ENCODE measurements at regions of chr12 and their contacts with region 1.

Region 1: DNA sequence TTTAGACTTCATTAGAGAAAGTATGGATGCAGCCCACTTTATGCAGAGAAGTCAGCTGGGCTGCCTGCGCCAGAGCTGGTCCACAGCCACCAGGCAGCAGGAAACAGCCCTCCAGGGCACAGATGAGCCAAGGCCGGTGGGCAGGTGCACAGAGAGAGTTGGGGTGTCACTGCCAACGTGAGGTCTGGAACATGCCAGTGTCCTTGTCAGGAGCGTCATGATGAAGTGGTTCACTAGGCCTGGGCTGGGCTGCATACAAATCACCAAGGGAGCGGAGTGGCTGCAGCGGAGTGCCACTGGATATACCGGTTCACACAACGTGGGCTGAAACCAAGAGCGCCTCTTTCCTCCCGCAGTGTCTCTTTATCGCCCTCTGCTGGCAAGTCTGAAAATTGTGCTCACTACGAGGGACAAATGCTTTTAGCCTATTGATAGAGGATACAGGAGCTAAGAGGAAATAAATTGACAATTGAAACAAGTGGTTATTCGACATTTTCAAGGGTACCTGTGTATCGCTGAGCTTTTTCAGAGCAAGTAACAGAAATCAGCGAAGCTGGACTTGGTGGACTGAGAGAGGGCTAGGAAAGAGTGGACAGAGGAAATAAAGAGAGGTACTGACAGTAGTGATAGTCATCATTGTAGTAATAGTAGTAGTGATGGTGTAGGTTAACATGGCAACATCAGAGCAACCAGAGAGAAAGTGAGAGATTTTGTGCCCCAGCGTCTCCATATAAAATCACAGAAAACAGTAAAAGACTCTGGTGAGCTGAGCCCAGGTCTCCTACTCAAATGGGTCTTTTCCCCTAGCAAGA is 52.0 kb upstream of the ITPR2 start:
- DNase-seq: peak; percentile 81 to 93 (median 86)
- ATAC-seq: peak; percentile 96 to 100 (median 98)
- H3K4me3 ChIP-seq: no peak overlapping the region
- H3K27ac ChIP-seq: no peak overlapping the region
- H3K4me1 ChIP-seq: no peaks in the 10 kb centered on the region
- H3K27me3 ChIP-seq: no peaks in the 10 kb centered on the region
- CTCF ChIP-seq: peak; percentile 91 to 97 (median 92)

Region 2: GRCh38 chr12:26760657-26761293 is 124.2 kb before region 1 on chr12:
- intact Hi-C with region 1: no loop called
- DNase-seq: no peak
- ATAC-seq: no peak
- H3K4me3 ChIP-seq: no peak overlapping the region
- H3K27ac ChIP-seq: no peak overlapping the region
- H3K4me1 ChIP-seq: no peaks in the 10 kb centered on the region
- H3K27me3 ChIP-seq: no peaks in the 10 kb centered on the region
- CTCF ChIP-seq: no peak

Region 3: DNA sequence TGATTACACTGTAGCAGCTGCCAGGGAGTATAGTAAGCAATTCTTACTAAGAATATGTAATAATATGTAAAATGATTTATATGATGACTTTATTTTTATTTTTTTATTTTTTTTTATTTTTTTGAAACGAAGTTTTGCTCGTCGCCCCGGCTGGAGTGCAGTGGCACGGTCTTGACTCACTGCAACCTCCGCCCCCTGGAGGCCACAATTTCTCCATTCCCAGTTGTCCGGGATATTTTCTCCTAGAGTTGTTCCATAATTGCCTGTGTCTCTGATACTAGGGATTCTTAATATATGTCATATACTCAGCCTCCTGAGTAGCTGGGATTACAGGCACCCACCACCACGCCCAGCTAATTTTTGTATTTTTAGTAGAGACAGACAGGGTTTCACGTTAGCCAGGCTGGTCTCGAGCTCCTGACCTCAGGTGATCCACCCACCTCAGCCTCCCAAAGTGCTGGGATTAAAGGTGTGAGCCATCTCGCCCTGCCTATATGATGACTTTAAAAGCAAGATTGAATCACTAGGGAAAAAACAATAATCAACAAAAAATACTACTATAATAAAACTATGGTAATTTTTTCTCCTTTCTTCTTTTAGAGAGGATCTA is 39.8 kb before region 1 on chr12:
- intact Hi-C with region 1: loop called in 1 of 3 experiments (anchors 5 kb)
- DNase-seq: peak in 5 of 6 donors; percentile 57 to 74 (median 64)
- ATAC-seq: peak; percentile 87 to 90 (median 88)
- H3K4me3 ChIP-seq: no peak overlapping the region
- H3K27ac ChIP-seq: peak overlapping the region in 2 of 4 donors; percentile 25 to 45
- H3K4me1 ChIP-seq: peaks cover 0 to 15% (median 0%) of the 10 kb centered on the region in 3 donors
- H3K27me3 ChIP-seq: no peaks in the 10 kb centered on the region
- CTCF ChIP-seq: peak; percentile 35 to 69 (median 60)

Measured in pancreas (tissue), 10 donors.